ENCODE measurements at regions of chr12 and their contacts with region 1.

Region 1: DNA sequence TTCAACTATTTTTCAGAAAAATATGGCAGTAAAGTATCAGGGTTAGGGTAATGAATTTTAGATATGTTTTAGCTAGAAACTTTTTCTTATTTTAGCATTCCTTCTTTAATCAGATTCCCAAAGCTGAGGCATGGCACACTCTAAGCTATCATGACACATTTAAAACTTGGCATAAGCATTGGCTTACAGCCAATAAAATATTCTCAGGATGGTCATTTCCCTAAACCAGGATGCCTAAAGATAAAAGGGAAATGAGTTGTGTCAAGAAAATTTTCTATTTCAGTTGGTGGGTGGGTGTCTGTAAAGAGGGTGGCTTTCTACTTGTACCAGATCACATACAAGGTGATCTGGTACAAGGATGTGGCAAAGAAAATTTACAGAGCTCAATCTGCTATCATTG is 47.8 kb downstream of the PEBP1 start:
- DNase-seq: no peak
- H3K4me3 ChIP-seq: no peak overlapping the region
- H3K27ac ChIP-seq: no peak overlapping the region
- H3K4me1 ChIP-seq: peaks cover 0 to 4% of the 10 kb centered on the region in 2 donors
- H3K27me3 ChIP-seq: no peaks in the 10 kb centered on the region
- CTCF ChIP-seq: no peak

Region 2: DNA sequence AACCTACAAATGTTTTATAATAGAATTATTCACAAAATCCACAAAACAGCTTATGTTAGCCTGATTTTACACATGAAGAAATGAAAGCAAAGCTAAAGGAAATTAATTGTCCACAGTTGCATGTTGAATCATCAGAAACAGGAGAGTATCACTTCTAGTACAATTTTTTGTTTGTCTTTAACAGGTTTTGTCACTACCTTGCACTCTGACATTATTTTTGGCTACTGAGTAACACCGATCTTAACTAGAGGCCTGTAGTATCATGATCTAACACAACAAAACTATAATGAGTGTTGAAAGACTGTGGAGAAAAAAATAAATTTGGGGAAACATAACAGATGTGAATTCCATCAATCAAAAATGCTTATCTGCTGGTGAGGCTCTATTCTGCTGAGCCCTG is 128.9 kb after region 1 on chr12:
- intact Hi-C with region 1: loop called (anchors 5 kb)
- DNase-seq: no peak
- H3K4me3 ChIP-seq: no peak overlapping the region
- H3K27ac ChIP-seq: no peak overlapping the region
- H3K4me1 ChIP-seq: peaks cover 0 to 5% of the 10 kb centered on the region in 2 donors
- H3K27me3 ChIP-seq: no peaks in the 10 kb centered on the region
- CTCF ChIP-seq: no peak

Measured in ascending aorta (tissue), 2 donors.